Right ventricle myocardium superior (tissue), 1 donor: ENCODE measurements at regions of chr6 and their contacts with region 1.

Region 1: DNA sequence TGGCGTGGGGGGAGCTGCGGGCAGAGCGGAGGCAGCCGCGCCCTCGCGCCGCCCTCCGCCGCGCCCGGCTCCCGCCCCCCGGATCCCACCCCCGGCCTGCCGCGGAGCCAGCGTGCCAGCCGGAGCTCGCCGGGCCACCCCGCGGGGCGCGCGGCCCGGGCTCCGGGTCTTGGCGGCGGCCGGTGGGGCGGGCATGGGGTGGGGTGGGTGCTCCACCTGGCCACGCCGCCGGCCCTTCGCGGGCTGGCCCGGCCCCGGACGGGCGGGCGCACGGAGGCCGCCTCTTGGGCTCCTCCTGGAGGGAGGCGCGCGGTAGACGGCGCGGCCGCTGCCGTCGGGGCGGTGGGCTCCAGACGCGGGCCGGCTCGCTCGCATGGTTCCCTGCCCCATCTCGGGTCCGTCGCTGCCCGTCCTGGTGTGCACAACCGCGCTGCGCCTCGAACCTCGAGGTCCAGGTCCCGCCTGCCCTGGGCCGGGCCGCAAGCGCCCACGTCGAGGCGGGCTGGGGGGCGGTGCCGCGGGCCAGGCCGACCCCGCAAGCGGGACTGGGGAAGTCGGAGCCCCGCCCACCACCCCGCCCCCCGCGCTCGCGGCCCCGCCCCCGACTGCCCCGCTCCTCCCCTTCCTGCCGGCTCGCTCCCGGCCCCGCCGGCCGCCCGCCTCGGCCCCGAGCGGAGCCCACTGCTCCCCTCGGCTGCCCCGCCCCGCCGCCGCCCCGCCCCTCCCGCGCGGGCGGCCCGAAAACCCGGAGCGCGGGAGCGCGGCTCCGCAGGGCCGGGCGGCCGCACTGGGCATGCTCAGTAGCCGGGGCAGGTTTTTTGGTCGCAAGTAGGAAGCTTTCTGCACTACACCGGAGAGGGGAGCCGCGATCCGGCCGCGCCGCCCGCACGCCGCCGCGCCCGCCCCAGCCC is at the start of gene CDYL:
- DNase-seq: peak; percentile 92
- ATAC-seq: peak; percentile 93
- total RNA-seq, gene CDYL: 27.2 TPM

Region 2: GRCh38 chr6:4647414-4648365 is 128.1 kb before region 1 on chr6:
- intact Hi-C with region 1: loop called (anchors 10 kb)
- DNase-seq: peak; percentile 84
- ATAC-seq: peak; percentile 98

Region 3: GRCh38 chr6:4714961-4715501 is 60.8 kb before region 1 on chr6:
- intact Hi-C with region 1: no loop called
- DNase-seq: no peak
- ATAC-seq: no peak

Region 4: DNA sequence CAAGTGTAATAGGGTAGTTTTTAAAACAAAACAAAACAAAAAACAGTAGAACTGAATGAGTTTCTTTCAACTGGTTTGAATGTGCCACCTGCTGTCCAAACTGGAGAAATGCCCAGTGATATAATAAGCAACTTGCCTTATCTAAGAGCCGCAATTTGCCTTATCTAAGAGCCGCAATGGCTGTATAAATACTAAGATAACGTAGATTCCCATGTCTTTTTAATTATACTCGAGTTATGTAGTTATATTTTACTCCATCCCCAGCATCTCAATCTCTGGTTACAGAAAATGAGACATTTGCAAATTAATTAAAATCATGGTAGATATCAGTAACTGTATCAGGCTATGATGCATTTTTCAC is 160.8 kb after region 1 on chr6:
- intact Hi-C with region 1: loop called (anchors 10 kb)
- DNase-seq: no peak
- ATAC-seq: peak; percentile 36